Posterior vena cava (tissue), 2 donors: ENCODE measurements at regions of chr20 and their contacts with region 1.

Region 1: DNA sequence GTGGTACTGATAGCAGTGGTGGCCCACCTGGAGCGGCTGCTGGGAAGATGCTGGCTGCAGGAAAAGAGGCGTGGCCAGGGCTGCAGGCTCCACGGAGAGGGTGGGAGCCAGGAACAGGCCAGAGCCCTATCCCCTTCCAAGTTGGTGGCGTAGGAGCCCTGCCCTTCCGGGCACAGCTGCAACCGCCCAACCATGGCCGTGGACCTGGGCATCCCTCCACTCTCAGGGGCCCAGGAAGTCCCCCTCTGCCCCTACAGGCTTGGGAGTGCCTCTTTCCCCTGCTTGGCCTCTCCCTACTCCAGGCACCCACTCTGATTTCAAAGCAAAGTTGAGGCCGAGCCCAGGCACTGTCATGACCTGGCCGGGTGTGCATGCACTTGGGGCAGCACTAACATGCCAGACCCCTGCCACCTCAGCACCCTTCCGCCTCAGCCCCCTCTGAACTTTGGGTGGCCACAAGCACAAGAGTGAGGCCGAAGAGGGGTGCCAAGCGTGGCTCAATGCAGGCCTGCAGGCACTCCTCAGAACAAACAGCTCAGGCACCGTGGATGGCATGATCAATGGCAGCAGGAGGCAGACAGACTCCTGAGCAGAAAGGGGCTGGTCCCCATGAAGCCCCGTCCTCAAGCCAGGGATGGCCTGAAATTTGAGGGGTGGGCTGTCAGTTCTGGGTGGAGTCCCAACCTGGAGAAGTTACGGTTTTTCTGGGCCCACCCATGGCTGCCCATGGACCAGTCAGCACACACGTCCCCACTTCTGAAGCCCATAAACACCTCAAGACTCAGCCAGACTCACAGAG is 200.3 kb upstream of the PRND start:
- DNase-seq: no peak

Region 2: GRCh38 chr20:3727401-3728021 is 793.9 kb before region 1 on chr20:
- intact Hi-C with region 1: no loop called
- DNase-seq: peak; percentile 77

Region 3: GRCh38 chr20:4533368-4534133 is 12.2 kb after region 1 on chr20:
- intact Hi-C with region 1: loop called in 1 of 2 experiments (anchors 1 kb)
- DNase-seq: no peak